ENCODE measurements at regions of chr15 and their contacts with region 1.

Region 1: DNA sequence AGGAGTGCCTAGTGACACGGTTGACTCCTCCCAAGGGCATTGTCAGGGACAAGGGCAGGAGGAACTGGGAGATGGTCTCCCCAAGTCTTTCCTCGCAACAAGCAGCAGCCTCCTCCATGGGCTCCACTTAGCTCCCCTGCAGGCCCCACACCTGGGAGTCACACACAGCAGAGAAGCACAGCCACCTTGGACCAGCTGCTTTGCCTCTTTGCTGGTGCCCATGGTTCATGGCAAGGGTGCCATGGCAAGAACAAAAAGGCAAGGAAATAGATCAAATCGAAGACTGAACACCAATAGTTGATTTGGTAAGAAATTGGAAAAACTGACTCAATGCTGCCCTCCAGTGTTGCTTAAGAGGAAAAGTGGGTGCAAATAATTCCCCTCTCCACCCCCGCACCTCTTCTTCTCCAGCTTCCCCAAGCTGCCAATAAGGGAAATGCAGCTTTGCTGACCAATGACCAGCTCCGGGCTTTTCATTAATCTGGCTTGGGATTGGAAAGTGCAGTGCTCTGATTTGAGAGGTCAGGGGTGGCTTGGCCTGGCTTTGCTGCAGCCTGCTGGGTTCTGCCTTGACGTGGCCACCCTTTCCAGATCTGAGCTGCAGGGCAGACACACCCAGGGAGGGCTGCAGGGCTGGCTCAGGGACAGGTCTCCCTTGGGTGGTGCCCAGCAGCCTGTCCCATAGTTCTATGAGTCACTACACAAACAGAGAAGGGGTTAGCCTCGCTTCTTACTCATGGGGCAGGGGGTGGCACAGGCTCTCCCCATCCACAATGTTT is 162.0 kb downstream of the KLF13 start:
- DNase-seq: peak; percentile 91
- H3K4me3 ChIP-seq: no peak overlapping the region
- H3K27ac ChIP-seq: peak overlapping the region; percentile 33 to 60 (median 40)
- H3K4me1 ChIP-seq: peaks cover 22 to 28% (median 24%) of the 10 kb centered on the region in 4 donors
- H3K27me3 ChIP-seq: peaks cover 0 to 13% (median 2%) of the 10 kb centered on the region in 4 donors
- CTCF ChIP-seq: peak; percentile 87 to 92 (median 89)
- EP300 ChIP-seq: no peak
- POLR2A ChIP-seq: no peak

Region 2: DNA sequence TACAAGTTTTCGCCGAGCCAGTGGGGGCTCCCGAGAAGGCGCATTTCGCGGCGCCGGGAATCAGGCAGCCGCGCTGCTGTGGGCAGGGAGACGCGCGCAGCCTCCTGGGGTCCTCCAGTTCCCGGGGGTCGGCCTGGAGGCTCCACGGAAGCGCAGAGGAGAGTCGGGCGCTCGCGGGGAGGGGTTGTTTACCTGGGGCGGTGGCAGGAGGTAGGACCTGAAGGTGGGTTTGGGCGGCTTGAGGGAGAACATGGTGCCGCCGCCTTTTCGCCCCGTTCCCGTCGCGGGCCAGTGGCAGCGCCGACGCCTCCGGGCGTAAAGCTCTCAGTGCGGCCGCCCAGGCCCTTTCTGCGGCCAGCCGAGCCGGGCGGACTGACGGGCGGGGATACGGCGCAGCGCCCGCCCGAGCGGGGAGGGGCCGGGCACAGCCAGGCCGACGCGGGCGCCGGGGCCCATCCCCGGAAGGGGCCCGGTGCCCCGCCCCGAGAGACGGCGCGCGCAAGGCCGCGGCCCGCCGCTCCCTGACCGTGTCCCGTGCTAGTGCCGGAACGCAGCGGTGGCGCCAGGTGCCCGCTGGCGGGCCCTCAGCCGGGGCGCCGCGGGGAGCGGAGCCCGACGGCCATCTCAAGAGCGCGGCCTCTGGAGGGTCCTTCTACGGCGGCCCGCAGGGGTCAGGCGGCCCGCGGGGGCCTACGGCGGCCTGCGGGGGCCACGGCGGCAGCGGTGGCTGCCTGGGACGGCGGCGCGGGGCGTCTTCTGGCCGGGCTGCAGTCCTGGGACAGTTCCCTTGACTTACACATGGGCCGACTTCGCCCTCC is 497.2 kb before region 1 on chr15 and contains the start of gene MTMR10:
- intact Hi-C with region 1: loop called (anchors 10 kb)
- DNase-seq: no peak
- H3K4me3 ChIP-seq: peak within 1 kb of the TSS; percentile 80 to 99 (median 87)
- H3K27ac ChIP-seq: peak within 1 kb of the TSS; percentile 91 to 96 (median 93)
- H3K4me1 ChIP-seq: peaks cover 25 to 49% (median 45%) of the 10 kb centered on the region in 4 donors
- H3K27me3 ChIP-seq: no peaks in the 10 kb centered on the region
- CTCF ChIP-seq: no peak
- EP300 ChIP-seq: no peak
- POLR2A ChIP-seq: peak; percentile 36
- total RNA-seq, gene MTMR10: 27.4 to 32.3 (median 30.2) TPM

Region 3: GRCh38 chr15:31200735-31201151 is 287.9 kb before region 1 on chr15:
- intact Hi-C with region 1: loop called (anchors 2 kb)
- DNase-seq: no peak
- H3K4me3 ChIP-seq: no peak overlapping the region
- H3K27ac ChIP-seq: no peak overlapping the region
- H3K4me1 ChIP-seq: peaks cover 0 to 21% (median 14%) of the 10 kb centered on the region in 4 donors
- H3K27me3 ChIP-seq: no peaks in the 10 kb centered on the region
- CTCF ChIP-seq: peak; percentile 48 to 61 (median 56)
- EP300 ChIP-seq: no peak
- POLR2A ChIP-seq: no peak

Region 4: GRCh38 chr15:31365655-31366127 is 122.9 kb before region 1 on chr15:
- intact Hi-C with region 1: loop called (anchors 2 kb)
- DNase-seq: peak; percentile 99
- H3K4me3 ChIP-seq: peak overlapping the region; percentile 48 to 56 (median 53)
- H3K27ac ChIP-seq: peak overlapping the region; percentile 92 to 93 (median 92)
- H3K4me1 ChIP-seq: peaks cover 83 to 94% (median 92%) of the 10 kb centered on the region in 4 donors
- H3K27me3 ChIP-seq: no peaks in the 10 kb centered on the region
- CTCF ChIP-seq: peak in 2 of 3 experiments; percentile 44 to 56
- EP300 ChIP-seq: peak; percentile 100
- POLR2A ChIP-seq: no peak

Region 5: GRCh38 chr15:31598620-31599019 is 110.0 kb after region 1 on chr15:
- intact Hi-C with region 1: no loop called
- DNase-seq: no peak
- H3K4me3 ChIP-seq: no peak overlapping the region
- H3K27ac ChIP-seq: no peak overlapping the region
- H3K4me1 ChIP-seq: no peaks in the 10 kb centered on the region
- H3K27me3 ChIP-seq: no peaks in the 10 kb centered on the region
- CTCF ChIP-seq: no peak
- EP300 ChIP-seq: no peak
- POLR2A ChIP-seq: no peak

Measured in esophagus muscularis mucosa (tissue), 4 donors.